ENCODE measurements at regions of chr12 and their contacts with region 1.

Region 1: DNA sequence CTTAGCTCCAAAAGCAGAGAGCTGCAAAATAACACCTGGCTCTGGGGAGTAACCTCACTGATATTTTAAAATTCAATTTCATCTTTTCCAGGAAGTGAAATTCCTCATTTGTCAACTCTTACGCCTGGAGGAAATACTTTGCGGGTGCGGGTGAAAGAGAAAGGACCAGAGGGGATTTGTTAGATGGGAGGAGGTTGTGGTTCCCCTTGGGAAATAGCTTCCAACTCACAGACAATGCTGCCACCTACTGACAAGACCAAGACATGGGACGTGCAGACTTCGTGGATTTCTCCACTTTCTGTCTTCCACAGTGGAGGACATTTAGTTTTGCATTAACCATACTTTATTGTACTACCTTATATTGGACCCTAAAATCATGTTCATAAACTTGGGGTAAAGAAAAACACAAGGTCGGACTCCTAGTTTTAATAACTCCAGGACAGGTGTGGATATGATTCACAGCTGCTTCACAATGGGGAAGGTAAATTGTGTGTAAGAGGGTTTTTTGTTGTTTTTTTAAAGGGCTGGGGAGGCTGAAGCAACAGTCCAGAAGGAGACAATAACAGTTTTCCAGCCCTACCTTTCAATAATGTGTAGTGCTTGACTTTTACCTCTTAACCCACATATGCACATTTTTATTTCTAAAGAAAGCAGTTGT is 10.8 kb downstream of the FBXL14 start:
- DNase-seq: peak in 1 of 2 donors; percentile 31
- ATAC-seq: peak; percentile 80 to 92 (median 84)
- H3K4me3 ChIP-seq: peak overlapping the region; percentile 37
- H3K27ac ChIP-seq: no peak overlapping the region
- H3K4me1 ChIP-seq: peaks cover 8% of the 10 kb centered on the region
- H3K27me3 ChIP-seq: no peaks in the 10 kb centered on the region
- CTCF ChIP-seq: peak; percentile 87

Region 2: DNA sequence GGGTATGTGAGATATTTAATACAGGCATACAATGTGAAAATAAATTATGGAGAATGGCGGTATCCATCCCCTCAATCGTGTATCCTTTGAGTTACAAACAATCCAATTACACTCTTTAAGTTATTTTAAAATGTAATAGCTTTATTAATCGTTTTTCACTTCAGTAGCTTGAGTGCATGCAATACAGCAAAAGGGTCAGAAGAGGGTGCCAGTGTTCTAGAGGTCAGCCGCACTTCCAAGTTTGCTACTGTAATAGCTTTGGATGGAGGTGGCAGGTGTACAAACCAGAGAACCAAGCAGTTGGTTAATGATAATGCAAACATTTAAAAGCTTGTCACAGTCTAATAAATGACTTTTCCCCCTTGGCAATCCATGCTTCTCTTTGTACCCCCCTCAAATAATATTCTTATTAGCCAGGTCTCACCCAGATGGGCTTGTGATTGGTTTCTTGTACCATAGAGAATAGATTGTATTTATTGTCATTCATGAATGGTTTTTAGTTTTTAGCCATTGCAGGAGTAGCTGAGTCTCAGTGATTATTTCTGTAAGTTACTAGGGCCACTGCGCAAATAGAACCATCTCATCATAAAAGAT is 465.5 kb before region 1 on chr12:
- intact Hi-C with region 1: loop called (anchors 1 to 2 kb)
- DNase-seq: peak; percentile 48 to 72
- ATAC-seq: peak; percentile 77 to 89 (median 88)
- H3K4me3 ChIP-seq: no peak overlapping the region
- H3K27ac ChIP-seq: no peak overlapping the region
- H3K4me1 ChIP-seq: no peaks in the 10 kb centered on the region
- H3K27me3 ChIP-seq: no peaks in the 10 kb centered on the region
- CTCF ChIP-seq: peak; percentile 98

Region 3: GRCh38 chr12:1282670-1283335 is 300.7 kb before region 1 on chr12:
- intact Hi-C with region 1: loop called in 1 of 2 experiments (anchors 5 kb)
- DNase-seq: no peak
- ATAC-seq: peak in 1 of 4 donors; percentile 62
- H3K4me3 ChIP-seq: no peak overlapping the region
- H3K27ac ChIP-seq: no peak overlapping the region
- H3K4me1 ChIP-seq: peaks cover 17% of the 10 kb centered on the region
- H3K27me3 ChIP-seq: no peaks in the 10 kb centered on the region
- CTCF ChIP-seq: no peak